Activated naive CD4-positive, alpha-beta T cell treated with anti-CD3 and anti-CD28 coated beads for 36 hours (primary cell): ENCODE measurements at regions of chr16 and their contacts with region 1.

Region 1: DNA sequence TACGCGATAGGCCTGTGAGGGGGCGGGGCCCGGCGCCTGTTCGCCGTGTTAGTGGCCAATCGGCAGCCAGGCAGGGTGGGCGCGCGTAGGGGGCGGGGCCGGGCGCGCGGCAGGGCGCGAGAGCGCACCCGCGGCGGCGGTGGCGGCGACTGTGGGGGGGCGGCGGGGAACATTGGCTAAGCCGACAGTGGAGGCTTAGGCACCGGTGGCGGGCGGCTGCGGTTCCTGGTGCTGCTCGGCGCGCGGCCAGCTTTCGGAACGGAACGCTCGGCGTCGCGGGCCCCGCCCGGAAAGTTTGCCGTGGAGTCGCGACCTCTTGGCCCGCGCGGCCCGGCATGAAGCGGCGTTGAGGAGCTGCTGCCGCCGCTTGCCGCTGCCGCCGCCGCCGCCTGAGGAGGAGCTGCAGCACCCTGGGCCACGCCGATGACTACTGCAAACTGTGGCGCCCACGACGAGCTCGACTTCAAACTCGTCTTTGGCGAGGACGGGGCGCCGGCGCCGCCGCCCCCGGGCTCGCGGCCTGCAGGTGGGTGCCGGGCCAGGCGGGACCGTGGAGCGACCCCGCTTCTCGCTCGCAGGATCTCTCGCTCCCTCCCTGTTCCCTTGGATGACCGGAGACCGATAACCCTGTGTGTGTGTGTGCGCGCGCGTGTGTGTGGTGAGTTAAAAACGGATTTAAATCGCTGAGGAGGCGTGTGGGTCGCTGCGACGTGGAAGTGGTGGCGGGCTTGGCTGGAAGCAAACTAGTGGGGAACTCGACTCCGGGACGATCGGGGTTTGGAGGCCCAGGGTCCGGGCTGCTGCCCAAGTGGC is at the start of gene NFATC3:
- DNase-seq: peak; percentile 99
- H3K4me3 Mint-ChIP-seq: peak within 1 kb of the TSS; percentile 81
- H3K27ac Mint-ChIP-seq: peak within 1 kb of the TSS; percentile 95
- H3K4me1 Mint-ChIP-seq: peaks cover 64% of the 10 kb centered on the region
- H3K27me3 Mint-ChIP-seq: no peaks in the 10 kb centered on the region
- total RNA-seq, gene NFATC3: 49.1 to 50.3 TPM

Region 2: DNA sequence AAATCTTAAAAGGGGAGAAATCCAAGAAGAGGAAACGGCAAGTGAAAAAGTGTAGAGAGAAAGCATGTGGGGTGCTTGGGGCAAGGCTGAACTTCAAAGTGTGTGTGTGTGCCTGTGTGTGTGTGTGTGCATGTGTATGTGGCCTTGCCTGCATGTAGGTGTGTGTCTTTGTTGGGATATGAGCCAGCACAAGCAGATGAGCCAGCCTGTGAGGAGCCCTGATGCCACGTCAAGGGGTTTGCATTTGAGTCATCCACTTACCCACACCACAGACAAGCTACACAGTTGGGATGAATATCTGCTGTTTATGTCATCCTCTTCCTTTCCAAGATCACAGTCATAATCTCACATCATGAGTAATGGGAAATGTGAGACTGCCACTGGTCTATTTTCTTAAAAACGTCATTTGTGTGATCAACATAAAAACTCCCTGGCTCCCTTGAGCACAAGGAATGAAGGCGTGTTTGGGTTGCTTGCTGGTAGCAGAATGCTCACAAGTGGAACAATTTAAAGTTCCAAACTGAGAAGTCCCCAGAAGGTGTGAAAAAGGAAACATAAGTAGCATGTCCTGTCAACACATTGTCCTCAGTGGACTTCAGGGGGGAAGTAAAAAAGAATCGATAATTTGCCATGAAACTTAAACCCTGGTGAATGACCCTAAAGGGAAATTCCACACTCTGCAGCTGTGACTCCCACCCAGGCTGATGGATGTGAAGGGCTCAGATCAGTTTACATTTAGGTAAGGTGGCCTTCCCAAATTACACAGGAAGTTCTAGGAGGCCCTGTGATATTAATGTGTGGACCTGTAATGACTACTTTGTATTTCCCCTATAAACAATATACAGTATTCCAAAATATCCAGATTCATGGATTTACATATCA is 773.6 kb before region 1 on chr16:
- CTCF ChIA-PET with region 1: no interaction called
- intact Hi-C with region 1: loop called (anchors 5 kb)
- DNase-seq: peak; percentile 98
- H3K4me3 Mint-ChIP-seq: peak overlapping the region; percentile 13
- H3K27ac Mint-ChIP-seq: peak overlapping the region; percentile 96
- H3K4me1 Mint-ChIP-seq: peaks cover 44% of the 10 kb centered on the region
- H3K27me3 Mint-ChIP-seq: no peaks in the 10 kb centered on the region

Region 3: GRCh38 chr16:67841764-67842508 is 243.5 kb before region 1 on chr16 and contains the start of gene THAP11:
- CTCF ChIA-PET with region 1: interaction called, 3 read pairs
- intact Hi-C with region 1: loop called (anchors 2 kb)
- DNase-seq: peak; percentile 97
- H3K4me3 Mint-ChIP-seq: peak within 1 kb of the TSS; percentile 91
- H3K27ac Mint-ChIP-seq: peak within 1 kb of the TSS; percentile 98
- H3K4me1 Mint-ChIP-seq: peaks cover 33% of the 10 kb centered on the region
- H3K27me3 Mint-ChIP-seq: no peaks in the 10 kb centered on the region
- total RNA-seq, gene THAP11: 19.9 to 20.6 TPM

Region 4: GRCh38 chr16:67999985-68000384 is 85.5 kb before region 1 on chr16:
- CTCF ChIA-PET with region 1: no interaction called
- intact Hi-C with region 1: loop called (anchors 2 kb)
- DNase-seq: peak; percentile 25
- H3K4me3 Mint-ChIP-seq: peak overlapping the region; percentile 80
- H3K27ac Mint-ChIP-seq: peak overlapping the region; percentile 94
- H3K4me1 Mint-ChIP-seq: peaks cover 49% of the 10 kb centered on the region
- H3K27me3 Mint-ChIP-seq: no peaks in the 10 kb centered on the region

Region 5: DNA sequence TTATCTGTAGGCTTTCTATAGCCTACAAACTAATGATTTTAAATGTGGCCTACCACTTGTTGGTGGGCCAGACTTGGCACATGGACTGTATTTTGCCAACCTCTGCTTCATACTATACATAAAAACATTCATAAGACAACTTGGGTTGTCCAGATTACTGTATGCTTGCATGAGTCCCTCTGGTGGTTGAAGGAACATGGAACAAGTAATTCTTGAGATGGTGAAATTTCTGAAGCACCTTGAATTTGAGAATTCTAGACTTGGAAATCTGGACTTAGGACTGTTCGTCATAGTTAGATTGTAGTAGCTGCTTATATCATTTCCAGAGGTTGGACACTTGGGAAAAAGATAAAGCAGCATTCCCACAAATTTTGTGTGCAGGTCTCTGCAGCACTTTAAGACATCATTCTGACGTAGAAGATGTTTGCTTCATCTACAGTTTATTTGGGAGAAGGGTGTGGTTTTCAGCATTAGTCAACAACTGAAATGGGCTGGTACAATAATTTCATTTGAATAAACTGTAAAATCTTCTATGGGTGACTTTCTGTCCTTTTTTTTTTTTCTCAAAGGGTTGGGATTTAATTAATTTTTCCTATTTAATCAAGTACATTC is 30.9 kb after region 1 on chr16:
- CTCF ChIA-PET with region 1: no interaction called
- intact Hi-C with region 1: no loop called
- DNase-seq: no peak
- H3K4me3 Mint-ChIP-seq: no peak overlapping the region
- H3K27ac Mint-ChIP-seq: no peak overlapping the region
- H3K4me1 Mint-ChIP-seq: peaks cover 85% of the 10 kb centered on the region
- H3K27me3 Mint-ChIP-seq: no peaks in the 10 kb centered on the region

Region 6: GRCh38 chr16:68179196-68179795 is 93.8 kb after region 1 on chr16:
- CTCF ChIA-PET with region 1: no interaction called
- intact Hi-C with region 1: no loop called
- DNase-seq: no peak
- H3K4me3 Mint-ChIP-seq: no peak overlapping the region
- H3K27ac Mint-ChIP-seq: no peak overlapping the region
- H3K4me1 Mint-ChIP-seq: peaks cover 12% of the 10 kb centered on the region
- H3K27me3 Mint-ChIP-seq: no peaks in the 10 kb centered on the region

Region 7: GRCh38 chr16:68214726-68215125 is 129.3 kb after region 1 on chr16:
- CTCF ChIA-PET with region 1: interaction called, 4 read pairs
- intact Hi-C with region 1: loop called (anchors 2 kb)
- DNase-seq: no peak
- H3K4me3 Mint-ChIP-seq: no peak overlapping the region
- H3K27ac Mint-ChIP-seq: no peak overlapping the region
- H3K4me1 Mint-ChIP-seq: peaks cover 41% of the 10 kb centered on the region
- H3K27me3 Mint-ChIP-seq: no peaks in the 10 kb centered on the region

Region 8: DNA sequence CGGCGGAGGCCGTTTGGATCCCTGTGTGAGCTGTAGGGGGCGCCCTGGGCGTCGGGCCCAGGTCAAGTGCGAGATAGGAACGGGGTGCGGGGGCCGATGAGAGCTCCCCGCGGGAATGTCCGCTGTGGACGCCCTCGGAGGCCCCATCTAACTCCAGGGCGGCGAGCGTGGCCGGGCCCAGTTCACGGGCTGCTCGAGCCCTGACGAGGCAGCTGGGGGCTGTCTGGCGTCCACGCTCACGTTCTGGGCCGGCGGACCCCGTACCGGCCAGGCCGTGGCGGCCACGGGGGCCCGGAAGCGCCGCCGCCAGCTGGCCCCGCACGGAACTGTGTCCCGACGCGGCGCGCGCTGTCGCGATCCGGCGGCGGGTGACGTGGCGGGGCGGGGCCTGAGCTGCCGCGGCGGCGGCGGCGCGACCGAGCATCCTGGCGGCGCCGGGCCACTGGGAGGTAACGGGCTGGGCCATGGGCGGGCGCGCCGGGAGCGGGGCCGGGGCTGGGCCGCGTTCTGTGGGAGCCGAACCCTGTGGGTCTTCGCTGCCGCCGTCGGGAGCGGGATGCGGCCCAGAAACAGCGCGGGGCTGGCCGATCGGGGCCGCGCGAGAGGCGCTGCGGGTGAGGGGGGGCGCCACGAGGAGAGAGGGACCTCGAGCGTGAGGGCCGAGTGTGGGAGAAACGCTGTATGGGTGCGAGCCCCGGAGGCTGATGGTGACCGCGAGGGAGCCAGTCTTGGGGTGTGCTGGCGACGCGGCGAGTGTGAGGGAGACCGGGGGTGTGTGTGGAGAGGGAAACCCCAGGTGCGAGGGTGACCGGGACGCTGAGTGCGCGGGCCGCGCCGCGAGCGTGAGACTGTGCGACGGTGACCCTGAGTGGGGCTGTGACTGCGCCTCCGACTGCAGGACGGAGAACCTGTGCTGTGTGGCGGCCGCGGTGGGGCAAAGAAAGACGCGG is 178.9 kb after region 1 on chr16 and contains the start of gene SLC7A6:
- CTCF ChIA-PET with region 1: no interaction called
- intact Hi-C with region 1: loop called (anchors 1 kb)
- DNase-seq: peak; percentile 88
- H3K4me3 Mint-ChIP-seq: peak within 1 kb of the TSS; percentile 85
- H3K27ac Mint-ChIP-seq: peak within 1 kb of the TSS; percentile 98
- H3K4me1 Mint-ChIP-seq: peaks cover 46% of the 10 kb centered on the region
- H3K27me3 Mint-ChIP-seq: no peaks in the 10 kb centered on the region
- total RNA-seq, gene SLC7A6: 79.4 to 83.4 TPM

Region 9: GRCh38 chr16:68644715-68645493 is 559.4 kb after region 1 on chr16 and contains the start of gene CDH3:
- CTCF ChIA-PET with region 1: no interaction called
- intact Hi-C with region 1: loop called (anchors 10 kb)
- DNase-seq: peak; percentile 46
- H3K4me3 Mint-ChIP-seq: peak within 1 kb of the TSS; percentile 69
- H3K27ac Mint-ChIP-seq: no peak within 1 kb of the TSS
- H3K4me1 Mint-ChIP-seq: peaks cover 31% of the 10 kb centered on the region
- H3K27me3 Mint-ChIP-seq: peaks cover 66% of the 10 kb centered on the region
- total RNA-seq, gene CDH3: 20.1 to 23.3 TPM